Heart left ventricle (tissue), 16 donors: ENCODE measurements at regions of chr5 and their contacts with region 1.

Region 1: GRCh38 chr5:141512390-141512910 is 23.6 kb downstream of the PCDHGC5 start:
- DNase-seq: peak; percentile 78 to 89 (median 83)
- ATAC-seq: peak; percentile 4 to 25 (median 10)
- H3K4me3 ChIP-seq: peak overlapping the region; percentile 33 to 67 (median 60)
- H3K27ac ChIP-seq: peak overlapping the region in 11 of 12 donors; percentile 79 to 96 (median 91)
- H3K4me1 ChIP-seq: peaks cover 14 to 85% (median 69%) of the 10 kb centered on the region in 12 donors
- H3K27me3 ChIP-seq: no peaks in the 10 kb centered on the region
- CTCF ChIP-seq: peak; percentile 72 to 91 (median 85)
- POLR2A ChIP-seq: no peak

Region 2: DNA sequence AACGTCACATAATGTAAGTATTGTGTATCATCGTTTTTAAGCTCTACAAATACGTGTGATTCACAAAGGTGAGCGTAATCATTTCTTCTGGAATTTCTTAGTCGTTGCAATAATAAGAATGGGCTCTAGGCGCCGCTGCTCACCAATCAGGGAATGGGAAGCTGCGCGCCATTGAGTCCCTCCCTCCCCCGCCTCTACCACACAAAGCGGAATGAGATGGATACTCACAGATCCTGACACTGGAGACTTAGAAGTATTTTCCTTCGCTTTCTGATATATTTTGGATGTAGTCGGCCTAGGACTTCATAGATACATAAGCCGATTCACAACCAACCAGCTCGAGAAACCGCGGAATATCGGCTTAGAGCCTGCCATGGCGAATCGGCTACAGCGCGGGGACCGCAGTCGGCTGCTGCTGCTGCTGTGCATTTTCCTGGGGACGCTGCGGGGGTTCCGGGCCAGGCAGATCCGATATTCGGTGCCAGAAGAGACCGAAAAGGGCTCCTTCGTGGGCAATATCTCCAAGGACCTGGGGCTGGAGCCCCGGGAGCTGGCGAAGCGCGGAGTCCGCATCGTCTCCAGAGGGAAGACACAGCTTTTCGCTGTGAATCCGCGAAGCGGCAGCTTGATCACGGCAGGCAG is 91.5 kb before region 1 on chr5 and contains the start of gene PCDHGA11:
- intact Hi-C with region 1: loop called in 2 of 10 experiments (anchors 5 kb)
- DNase-seq: peak in 3 of 5 donors; percentile 40 to 64 (median 61)
- ATAC-seq: peak in 2 of 4 donors; percentile 52 to 62
- H3K4me3 ChIP-seq: peak within 1 kb of the TSS in 10 of 12 donors; percentile 9 to 45 (median 40)
- H3K27ac ChIP-seq: no peak within 1 kb of the TSS
- H3K4me1 ChIP-seq: peaks cover 0 to 12% (median 1%) of the 10 kb centered on the region in 12 donors
- H3K27me3 ChIP-seq: peaks cover 0 to 76% (median 0%) of the 10 kb centered on the region in 9 donors
- CTCF ChIP-seq: peak; percentile 28 to 57 (median 48)
- POLR2A ChIP-seq: no peak
- total RNA-seq, gene PCDHGA11: 2.8 to 9.0 (median 5.3) TPM

Region 3: DNA sequence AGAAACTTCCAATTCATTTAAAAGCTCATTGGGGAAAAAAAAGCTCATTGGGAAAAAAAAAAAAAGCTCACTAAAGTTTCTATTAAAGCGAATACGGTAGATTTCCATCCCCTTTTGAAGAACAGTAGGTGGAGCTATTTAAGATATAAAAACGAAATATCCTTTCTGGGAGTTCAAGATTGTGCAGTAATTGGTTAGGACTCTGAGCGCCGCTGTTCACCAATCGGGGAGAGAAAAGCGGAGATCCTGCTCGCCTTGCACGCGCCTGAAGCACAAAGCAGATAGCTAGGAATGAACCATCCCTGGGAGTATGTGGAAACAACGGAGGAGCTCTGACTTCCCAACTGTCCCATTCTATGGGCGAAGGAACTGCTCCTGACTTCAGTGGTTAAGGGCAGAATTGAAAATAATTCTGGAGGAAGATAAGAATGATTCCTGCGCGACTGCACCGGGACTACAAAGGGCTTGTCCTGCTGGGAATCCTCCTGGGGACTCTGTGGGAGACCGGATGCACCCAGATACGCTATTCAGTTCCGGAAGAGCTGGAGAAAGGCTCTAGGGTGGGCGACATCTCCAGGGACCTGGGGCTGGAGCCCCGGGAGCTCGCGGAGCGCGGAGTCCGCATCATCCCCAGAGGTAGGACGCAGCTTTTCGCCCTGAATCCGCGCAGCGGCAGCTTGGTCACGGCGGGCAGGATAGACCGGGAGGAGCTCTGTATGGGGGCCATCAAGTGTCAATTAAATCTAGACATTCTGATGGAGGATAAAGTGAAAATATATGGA is 81.9 kb before region 1 on chr5 and contains the start of gene PCDHGA12:
- intact Hi-C with region 1: loop called in 1 of 10 experiments (anchors 5 kb)
- DNase-seq: peak in 4 of 5 donors; percentile 56 to 77 (median 65)
- ATAC-seq: peak; percentile 67 to 94 (median 86)
- H3K4me3 ChIP-seq: peak within 1 kb of the TSS in 11 of 12 donors; percentile 19 to 58 (median 42)
- H3K27ac ChIP-seq: peak within 1 kb of the TSS in 8 of 12 donors; percentile 10 to 67 (median 40)
- H3K4me1 ChIP-seq: peaks cover 0 to 16% (median 0%) of the 10 kb centered on the region in 12 donors
- H3K27me3 ChIP-seq: peaks cover 0 to 52% (median 0%) of the 10 kb centered on the region in 9 donors
- CTCF ChIP-seq: peak; percentile 34 to 73 (median 55)
- POLR2A ChIP-seq: no peak
- total RNA-seq, gene PCDHGA12: 3.2 to 15.5 (median 7.3) TPM

Region 4: GRCh38 chr5:141475625-141476131 is 36.8 kb before region 1 on chr5 and contains the start of gene PCDHGC3:
- intact Hi-C with region 1: loop called in 5 of 10 experiments (anchors 5 kb)
- DNase-seq: peak; percentile 92 to 96 (median 93)
- ATAC-seq: peak; percentile 98 to 99 (median 99)
- H3K4me3 ChIP-seq: peak within 1 kb of the TSS; percentile 22 to 74 (median 64)
- H3K27ac ChIP-seq: peak within 1 kb of the TSS; percentile 74 to 94 (median 86)
- H3K4me1 ChIP-seq: peaks cover 4 to 50% (median 38%) of the 10 kb centered on the region in 12 donors
- H3K27me3 ChIP-seq: peaks cover 0 to 42% (median 0%) of the 10 kb centered on the region in 9 donors
- CTCF ChIP-seq: peak; percentile 14 to 69 (median 49)
- POLR2A ChIP-seq: peak in 1 of 2 donors; percentile 69
- total RNA-seq, gene PCDHGC3: 12.3 to 32.5 (median 18.4) TPM

Region 5: GRCh38 chr5:141547488-141547887 is 35.0 kb after region 1 on chr5:
- intact Hi-C with region 1: no loop called
- DNase-seq: no peak
- ATAC-seq: no peak
- H3K4me3 ChIP-seq: no peak overlapping the region
- H3K27ac ChIP-seq: no peak overlapping the region
- H3K4me1 ChIP-seq: no peaks in the 10 kb centered on the region
- H3K27me3 ChIP-seq: no peaks in the 10 kb centered on the region
- CTCF ChIP-seq: no peak
- POLR2A ChIP-seq: no peak

Region 6: DNA sequence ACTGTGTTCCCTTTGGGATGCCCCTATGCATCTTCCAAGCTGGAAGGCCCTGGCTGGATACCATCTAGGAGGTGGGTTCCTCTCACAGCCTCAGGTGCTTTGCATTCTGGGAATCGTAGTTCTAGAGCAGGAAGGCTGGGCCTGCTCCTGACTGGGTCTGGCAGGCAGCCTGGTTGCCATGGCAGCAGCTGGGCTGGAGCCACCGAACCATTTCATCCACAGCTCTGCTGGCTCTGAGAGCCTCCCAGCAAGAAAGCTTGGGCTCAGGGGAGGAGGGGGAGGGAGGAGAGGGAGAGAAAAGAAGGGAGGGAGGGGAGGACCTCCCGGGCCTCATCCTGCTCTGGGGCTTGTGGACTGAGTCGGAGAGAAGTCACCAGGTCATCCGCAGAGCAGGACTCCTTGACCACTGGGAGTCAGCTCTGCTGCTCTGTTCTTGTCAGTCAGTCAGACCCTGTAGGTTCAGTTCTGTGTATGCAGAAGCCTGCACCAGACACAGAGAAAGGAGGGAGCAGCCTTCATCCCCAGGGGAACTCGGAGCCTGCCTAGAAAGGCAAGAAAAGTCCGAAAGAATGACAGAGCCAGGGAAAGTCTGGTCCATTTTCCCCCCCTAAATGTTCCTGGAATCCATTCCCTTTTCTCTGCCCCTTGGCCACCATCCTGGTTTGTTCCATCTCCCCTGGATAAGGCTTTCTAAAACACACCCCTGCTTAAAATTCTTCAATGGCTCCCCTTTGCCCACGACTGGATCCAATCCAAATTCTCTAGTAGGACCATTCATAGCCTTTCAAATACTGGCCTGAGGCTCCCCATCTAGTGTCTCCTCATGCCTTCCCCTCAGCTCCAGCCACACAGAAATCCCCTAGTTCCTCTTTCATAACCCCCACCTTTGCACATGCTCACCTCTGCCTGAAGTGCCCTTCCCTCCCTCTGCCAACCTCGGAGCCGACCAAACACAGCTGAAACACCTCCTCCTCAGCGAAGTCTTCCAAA is 235.0 kb after region 1 on chr5:
- intact Hi-C with region 1: no loop called
- DNase-seq: peak; percentile 84 to 92 (median 88)
- ATAC-seq: peak; percentile 84 to 92 (median 85)
- H3K4me3 ChIP-seq: no peak overlapping the region
- H3K27ac ChIP-seq: no peak overlapping the region
- H3K4me1 ChIP-seq: peaks cover 0 to 12% (median 2%) of the 10 kb centered on the region in 12 donors
- H3K27me3 ChIP-seq: peaks cover 0 to 6% (median 3%) of the 10 kb centered on the region in 9 donors
- CTCF ChIP-seq: no peak
- POLR2A ChIP-seq: no peak